PC-9 (cell line): ENCODE measurements at regions of chr11 and their contacts with region 1.

Region 1: DNA sequence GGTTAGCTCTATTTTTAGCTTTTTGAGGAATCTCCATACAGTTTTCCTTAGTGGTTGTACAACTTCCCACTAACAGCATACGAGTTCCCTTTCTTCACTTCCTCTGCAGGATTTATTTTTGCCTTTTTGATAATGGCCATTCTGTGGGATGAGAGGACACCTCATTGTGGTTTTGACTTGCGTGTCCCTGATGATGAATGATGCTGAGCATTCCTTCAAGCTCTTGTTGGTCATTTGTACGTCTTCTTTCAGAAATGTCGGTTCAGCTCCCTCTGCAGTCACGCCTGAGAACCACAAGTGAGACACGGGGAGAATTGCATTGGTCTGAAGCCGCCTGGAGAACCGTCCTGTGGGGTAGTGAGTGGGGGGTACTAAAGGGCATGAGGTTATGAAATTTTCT is 2.0 kb upstream of the KRTAP5-10 start:
- DNase-seq: peak in 1 of 2 experiments; percentile 31
- H3K4me3 ChIP-seq: no peak overlapping the region
- H3K27ac ChIP-seq: no peak overlapping the region
- H3K4me1 ChIP-seq: peaks cover 7% of the 10 kb centered on the region; the same call in 1 of the 2 replicates
- H3K27me3 ChIP-seq: peaks cover 25% of the 10 kb centered on the region
- CTCF ChIP-seq: peak; percentile 69; the same call in 1 of the 2 replicates

Region 2: GRCh38 chr11:71425855-71426254 is 137.5 kb before region 1 on chr11:
- CTCF ChIA-PET with region 1: interaction called, 13 read pairs
- POLR2A ChIA-PET with region 1: no interaction called
- intact Hi-C with region 1: no loop called
- DNase-seq: peak; percentile 82 to 92
- H3K4me3 ChIP-seq: no peak overlapping the region
- H3K27ac ChIP-seq: no peak overlapping the region
- H3K4me1 ChIP-seq: peaks cover 18% of the 10 kb centered on the region
- H3K27me3 ChIP-seq: no peaks in the 10 kb centered on the region
- CTCF ChIP-seq: no peak